PC-9 (cell line): ENCODE measurements at regions of chr7 and their contacts with region 1.

Region 1: GRCh38 chr7:25886387-25887240 is 265.4 kb upstream of the NFE2L3 start:
- DNase-seq: no peak
- H3K4me3 ChIP-seq: no peak overlapping the region
- H3K27ac ChIP-seq: no peak overlapping the region
- H3K4me1 ChIP-seq: no peaks in the 10 kb centered on the region
- H3K27me3 ChIP-seq: peaks cover 33% of the 10 kb centered on the region
- CTCF ChIP-seq: no peak

Region 2: GRCh38 chr7:26237035-26237807 is 350.6 kb after region 1 on chr7:
- CTCF ChIA-PET with region 1: interaction called, 16 read pairs
- POLR2A ChIA-PET with region 1: no interaction called
- intact Hi-C with region 1: no loop called
- DNase-seq: no peak
- H3K4me3 ChIP-seq: no peak overlapping the region
- H3K27ac ChIP-seq: no peak overlapping the region
- H3K4me1 ChIP-seq: no peaks in the 10 kb centered on the region
- H3K27me3 ChIP-seq: no peaks in the 10 kb centered on the region
- CTCF ChIP-seq: no peak

Region 3: GRCh38 chr7:26284995-26285632 is 398.5 kb after region 1 on chr7:
- CTCF ChIA-PET with region 1: interaction called, 14 read pairs
- POLR2A ChIA-PET with region 1: no interaction called
- intact Hi-C with region 1: no loop called
- DNase-seq: no peak
- H3K4me3 ChIP-seq: no peak overlapping the region
- H3K27ac ChIP-seq: no peak overlapping the region
- H3K4me1 ChIP-seq: no peaks in the 10 kb centered on the region
- H3K27me3 ChIP-seq: no peaks in the 10 kb centered on the region
- CTCF ChIP-seq: peak; percentile 17; the same call in 1 of the 2 replicates

Region 4: DNA sequence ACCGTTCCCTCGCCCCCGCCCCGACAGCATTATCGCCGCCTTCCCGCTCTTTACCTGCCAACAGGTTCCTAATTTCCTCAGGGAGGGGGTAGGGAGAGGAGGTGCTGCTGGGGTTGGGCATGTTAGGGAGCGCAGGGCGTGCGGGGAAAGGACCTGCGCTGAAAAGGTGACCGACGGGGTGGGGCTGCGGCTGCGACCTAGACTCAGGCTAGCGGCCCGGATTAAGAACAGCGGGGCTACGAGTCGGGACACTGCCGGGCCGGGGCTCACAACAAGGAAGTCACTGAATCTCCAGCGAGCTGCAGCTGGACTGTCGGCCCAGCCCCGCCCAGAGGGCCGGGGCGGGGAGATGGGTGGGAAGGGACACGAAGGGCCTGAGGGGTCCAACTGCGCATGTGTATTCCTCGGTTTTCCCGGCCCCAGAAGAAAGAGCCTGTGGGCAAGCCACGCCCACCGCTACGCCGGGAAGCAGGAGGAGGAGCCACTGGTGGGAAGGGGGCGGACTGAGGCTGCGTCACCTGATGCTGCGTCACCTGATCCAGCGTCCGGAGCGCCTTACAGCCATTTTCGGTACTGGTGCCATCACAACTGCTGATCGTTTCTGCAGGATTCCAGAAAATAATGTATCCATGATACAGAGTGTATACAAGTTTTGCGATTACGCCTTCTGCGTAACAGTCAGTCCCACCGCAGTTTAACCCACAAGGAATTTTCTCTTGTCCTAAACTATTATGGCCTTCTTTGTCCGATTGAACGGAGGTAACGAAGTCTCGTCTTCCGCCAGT is 977.9 kb after region 1 on chr7 and contains the start of gene SKAP2:
- CTCF ChIA-PET with region 1: no interaction called
- POLR2A ChIA-PET with region 1: no interaction called
- intact Hi-C with region 1: no loop called
- DNase-seq: peak; percentile 98 to 100
- H3K4me3 ChIP-seq: peak within 1 kb of the TSS; percentile 77
- H3K27ac ChIP-seq: peak within 1 kb of the TSS; percentile 84
- H3K4me1 ChIP-seq: peaks cover 58% of the 10 kb centered on the region
- H3K27me3 ChIP-seq: no peaks in the 10 kb centered on the region
- CTCF ChIP-seq: no peak
- total RNA-seq, gene SKAP2: 59.2 and 74.9 TPM in 2 replicates